Caco-2 (cell line): ENCODE measurements at regions of chr12 and their contacts with region 1.

Region 1: DNA sequence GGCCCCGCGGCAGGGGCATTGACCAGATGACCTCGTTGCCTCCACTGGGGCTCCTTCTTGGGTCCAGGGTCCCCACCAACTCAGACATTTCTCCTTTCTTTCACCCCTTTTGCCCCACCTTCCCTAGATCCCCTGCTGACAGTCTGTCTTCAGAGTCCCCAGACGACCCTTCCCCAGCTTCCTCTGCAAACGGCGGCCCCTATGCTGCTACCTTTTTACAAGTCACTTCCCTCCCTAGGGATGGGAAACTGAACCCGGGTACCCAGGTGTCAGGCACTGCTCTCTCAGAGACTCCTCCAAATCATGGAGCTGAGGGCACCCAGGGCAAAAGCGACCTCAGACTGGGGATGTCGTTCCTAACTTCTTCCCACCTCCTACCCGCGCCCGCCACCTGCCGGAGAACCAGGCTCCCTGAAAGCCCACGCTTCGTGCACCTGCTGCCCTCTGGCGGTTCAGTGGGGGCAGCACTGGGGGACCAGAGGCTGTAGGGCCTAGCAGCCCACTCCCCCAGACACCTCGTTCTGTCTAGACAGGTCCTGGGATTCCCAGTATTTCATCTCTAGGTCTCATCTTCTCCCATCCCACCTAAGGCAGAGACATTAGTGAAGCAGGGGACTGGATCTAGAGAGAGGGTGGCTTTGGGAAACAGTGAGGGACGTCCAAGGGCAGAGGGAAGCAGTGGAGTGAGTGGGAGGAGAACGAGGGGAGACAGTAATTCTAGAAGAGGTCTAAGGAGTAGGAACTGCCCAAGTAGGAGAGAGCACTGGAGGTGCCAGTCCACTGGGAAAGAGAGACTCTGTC is 4.9 kb downstream of the ZNF385A start:
- DNase-seq: peak; percentile 89 to 95
- H3K4me3 ChIP-seq: peak overlapping the region; percentile 39
- H3K4me3 Mint-ChIP-seq: peak overlapping the region; percentile 81
- H3K27ac Mint-ChIP-seq: no peak overlapping the region
- H3K4me1 ChIP-seq: no peaks in the 10 kb centered on the region
- H3K4me1 Mint-ChIP-seq: no peaks in the 10 kb centered on the region
- H3K27me3 ChIP-seq: no peaks in the 10 kb centered on the region
- H3K27me3 Mint-ChIP-seq: no peaks in the 10 kb centered on the region
- CTCF ChIP-seq: peak; percentile 99 to 100

Region 2: DNA sequence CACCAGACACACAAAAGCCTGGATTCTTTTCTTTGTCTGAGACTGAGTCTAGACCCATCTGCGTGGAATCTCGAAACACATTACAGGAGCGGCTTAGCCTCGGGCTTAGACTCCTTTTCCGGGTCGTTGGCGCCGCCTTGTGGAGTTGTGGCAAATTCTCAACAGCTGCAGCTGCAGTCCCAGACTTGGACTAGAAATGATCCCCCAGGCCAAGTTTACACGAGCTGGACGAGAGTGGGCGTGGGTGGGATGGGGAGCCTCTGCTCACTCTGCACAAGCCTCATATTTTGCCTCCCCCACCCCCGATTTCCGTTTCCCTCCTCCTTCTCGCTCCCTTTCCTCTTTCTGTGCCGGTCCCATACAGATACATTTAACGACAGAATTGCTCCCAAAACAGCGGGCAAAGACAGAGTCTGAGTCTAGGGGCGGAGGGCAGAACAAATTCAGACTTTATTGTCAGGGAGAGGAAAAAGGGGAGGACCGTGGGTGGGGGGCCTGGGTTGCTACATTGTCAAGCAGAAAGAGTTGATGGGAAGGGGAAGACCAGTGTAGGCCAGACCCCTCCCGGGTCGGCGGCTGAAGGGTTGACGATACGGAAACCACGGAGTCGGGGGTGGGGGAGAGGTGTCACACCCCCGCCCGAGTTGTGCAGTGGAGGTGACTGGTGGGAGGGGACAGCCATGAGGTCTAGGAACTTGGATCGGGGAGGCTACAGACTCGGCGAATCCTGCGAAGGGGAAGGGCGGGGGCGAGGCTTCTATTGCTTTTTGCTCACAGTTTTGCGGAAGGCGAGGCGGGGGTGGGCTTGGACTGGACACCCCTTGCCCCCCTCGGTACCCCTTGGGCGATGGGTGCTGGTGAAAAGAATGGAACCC is 10.7 kb before region 1 on chr12:
- CTCF ChIA-PET with region 1: interaction called, 28 read pairs
- POLR2A ChIA-PET with region 1: no interaction called
- intact Hi-C with region 1: no loop called
- DNase-seq: peak; percentile 86 to 87
- H3K4me3 ChIP-seq: no peak overlapping the region
- H3K4me3 Mint-ChIP-seq: peak overlapping the region; percentile 23
- H3K27ac Mint-ChIP-seq: no peak overlapping the region
- H3K4me1 ChIP-seq: peaks cover 6% of the 10 kb centered on the region; the same call in 1 of the 2 replicates
- H3K4me1 Mint-ChIP-seq: no peaks in the 10 kb centered on the region
- H3K27me3 ChIP-seq: no peaks in the 10 kb centered on the region
- H3K27me3 Mint-ChIP-seq: no peaks in the 10 kb centered on the region
- CTCF ChIP-seq: peak; percentile 75 to 86

Region 3: DNA sequence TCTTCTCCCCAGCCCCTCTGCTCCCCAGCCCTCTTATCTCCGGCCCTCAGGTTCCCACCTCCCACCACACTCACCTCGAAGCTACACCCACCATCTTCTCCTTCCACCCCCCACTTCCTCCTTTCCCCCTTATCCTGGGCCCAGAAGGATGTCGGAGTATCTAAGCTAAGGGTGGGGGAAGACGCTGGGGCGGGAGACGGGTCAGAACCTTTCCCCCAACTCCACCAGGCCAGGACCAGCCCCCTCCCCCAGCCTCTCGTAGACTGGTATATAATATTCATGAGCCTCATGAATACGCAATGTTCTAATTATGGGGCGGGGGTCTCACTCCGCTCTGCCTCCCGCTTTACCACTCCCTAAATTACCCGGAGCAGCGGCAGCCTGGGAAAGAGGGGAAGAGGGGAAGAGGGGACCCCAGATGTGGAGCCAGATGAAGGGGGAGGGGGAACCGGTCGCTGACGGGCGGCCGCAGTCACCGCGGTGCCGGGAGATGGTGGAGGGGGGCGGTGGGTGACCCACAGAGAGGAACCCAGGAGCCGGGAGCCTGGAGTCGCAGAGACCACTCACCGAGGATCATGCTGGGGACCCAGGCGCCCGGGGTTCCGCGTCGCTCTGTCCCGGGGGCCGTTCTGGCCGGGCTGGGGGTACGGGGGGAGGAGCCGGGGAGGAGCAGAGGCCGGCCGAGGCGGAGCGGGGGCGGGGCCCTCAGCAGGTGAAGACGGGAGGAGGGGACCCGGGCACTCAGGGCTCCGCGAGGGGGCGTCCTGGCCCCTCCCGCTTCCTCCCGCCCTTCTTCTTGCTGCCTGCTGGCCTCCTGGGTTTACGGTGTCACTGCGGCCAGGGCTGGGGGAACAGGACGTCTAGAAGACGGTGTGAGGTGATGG is 11.3 kb after region 1 on chr12:
- CTCF ChIA-PET with region 1: interaction called, 9 read pairs
- POLR2A ChIA-PET with region 1: interaction called, 4 read pairs
- intact Hi-C with region 1: loop called (anchors 1 kb)
- DNase-seq: peak; percentile 79 to 84
- H3K4me3 ChIP-seq: peak overlapping the region; percentile 67
- H3K4me3 Mint-ChIP-seq: peak overlapping the region; percentile 49
- H3K27ac Mint-ChIP-seq: no peak overlapping the region
- H3K4me1 ChIP-seq: peaks cover 34% of the 10 kb centered on the region
- H3K4me1 Mint-ChIP-seq: peaks cover 22% of the 10 kb centered on the region
- H3K27me3 ChIP-seq: no peaks in the 10 kb centered on the region
- H3K27me3 Mint-ChIP-seq: no peaks in the 10 kb centered on the region
- CTCF ChIP-seq: peak; percentile 35 to 72